Endothelial cell of umbilical vein (primary cell): ENCODE measurements at regions of chr1 and their contacts with region 1.

Region 1: GRCh38 chr1:200724064-200724463 is 14.6 kb upstream of the CAMSAP2 start:
- DNase-seq: no peak
- H3K4me3 ChIP-seq: no peak overlapping the region
- H3K27ac ChIP-seq: no peak overlapping the region
- H3K4me1 ChIP-seq: no peaks in the 10 kb centered on the region
- H3K27me3 ChIP-seq: peaks cover 0 to 3% of the 10 kb centered on the region in 2 experiments
- CTCF ChIP-seq: no peak
- POLR2A ChIP-seq: no peak

Region 2: GRCh38 chr1:200674838-200675587 is 49.1 kb before region 1 on chr1:
- CTCF ChIA-PET with region 1: no interaction called
- POLR2A ChIA-PET with region 1: interaction called, 11 read pairs
- dilution Hi-C with region 1: no loop called
- intact Hi-C with region 1: no loop called
- DNase-seq: no peak
- H3K4me3 ChIP-seq: no peak overlapping the region
- H3K27ac ChIP-seq: no peak overlapping the region
- H3K4me1 ChIP-seq: peaks cover 14% of the 10 kb centered on the region
- H3K27me3 ChIP-seq: no peaks in the 10 kb centered on the region
- CTCF ChIP-seq: no peak
- POLR2A ChIP-seq: no peak

Region 3: GRCh38 chr1:200751717-200752116 is 27.7 kb after region 1 on chr1:
- CTCF ChIA-PET with region 1: no interaction called
- POLR2A ChIA-PET with region 1: interaction called, 12 read pairs
- dilution Hi-C with region 1: no loop called
- intact Hi-C with region 1: no loop called
- DNase-seq: no peak
- H3K4me3 ChIP-seq: no peak overlapping the region
- H3K27ac ChIP-seq: no peak overlapping the region
- H3K4me1 ChIP-seq: no peaks in the 10 kb centered on the region
- H3K27me3 ChIP-seq: no peaks in the 10 kb centered on the region
- CTCF ChIP-seq: no peak
- POLR2A ChIP-seq: no peak